Activated naive CD4-positive, alpha-beta T cell treated with anti-CD3 and anti-CD28 coated beads for 36 hours (primary cell): ENCODE measurements at regions of chr4 and their contacts with region 1.

Region 1: DNA sequence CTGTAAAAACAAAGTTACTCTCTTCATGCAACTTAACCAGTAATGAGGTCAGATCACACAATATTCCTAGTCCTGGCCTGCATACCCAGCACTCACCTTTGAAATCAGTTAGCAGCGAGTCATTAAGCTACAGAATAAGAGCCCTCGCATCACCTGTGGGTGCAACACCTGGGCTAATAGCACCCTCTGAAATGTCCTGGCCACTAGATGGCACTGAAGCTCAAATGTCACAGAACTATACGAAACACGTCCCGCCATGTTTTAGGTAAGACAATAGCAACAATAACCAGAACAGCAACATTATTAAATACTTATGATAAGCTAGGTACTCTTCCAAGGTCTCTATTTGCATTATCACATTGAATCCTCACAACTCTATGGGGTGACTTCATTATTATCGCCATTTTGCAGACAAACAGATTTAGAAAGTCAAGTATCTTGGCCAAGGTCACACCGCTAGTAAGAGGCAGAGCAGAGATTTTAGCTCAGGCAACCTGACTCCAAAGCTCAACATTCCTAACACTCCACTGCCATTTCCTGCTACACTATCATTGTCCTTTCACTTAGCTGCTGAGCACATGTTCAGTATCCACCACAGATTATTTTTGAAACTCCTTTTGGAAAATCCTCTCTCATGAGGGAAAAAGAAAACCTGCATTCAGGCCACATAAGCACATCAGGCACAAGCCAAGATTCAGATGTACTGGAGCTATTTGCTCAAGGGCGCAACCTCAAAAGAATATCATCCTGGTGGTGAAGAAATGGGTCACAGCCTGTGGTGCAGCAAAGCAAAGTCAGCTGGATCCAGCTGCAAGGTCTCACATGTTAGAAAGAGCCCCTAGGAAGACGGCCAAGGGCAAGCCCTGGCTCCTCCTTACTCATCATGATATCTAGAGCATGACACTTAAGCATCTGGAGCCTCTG is 59.5 kb upstream of the KDR start:
- DNase-seq: peak; percentile 54
- H3K4me3 Mint-ChIP-seq: no peak overlapping the region
- H3K27ac Mint-ChIP-seq: no peak overlapping the region
- H3K4me1 Mint-ChIP-seq: no peaks in the 10 kb centered on the region
- H3K27me3 Mint-ChIP-seq: no peaks in the 10 kb centered on the region

Region 2: DNA sequence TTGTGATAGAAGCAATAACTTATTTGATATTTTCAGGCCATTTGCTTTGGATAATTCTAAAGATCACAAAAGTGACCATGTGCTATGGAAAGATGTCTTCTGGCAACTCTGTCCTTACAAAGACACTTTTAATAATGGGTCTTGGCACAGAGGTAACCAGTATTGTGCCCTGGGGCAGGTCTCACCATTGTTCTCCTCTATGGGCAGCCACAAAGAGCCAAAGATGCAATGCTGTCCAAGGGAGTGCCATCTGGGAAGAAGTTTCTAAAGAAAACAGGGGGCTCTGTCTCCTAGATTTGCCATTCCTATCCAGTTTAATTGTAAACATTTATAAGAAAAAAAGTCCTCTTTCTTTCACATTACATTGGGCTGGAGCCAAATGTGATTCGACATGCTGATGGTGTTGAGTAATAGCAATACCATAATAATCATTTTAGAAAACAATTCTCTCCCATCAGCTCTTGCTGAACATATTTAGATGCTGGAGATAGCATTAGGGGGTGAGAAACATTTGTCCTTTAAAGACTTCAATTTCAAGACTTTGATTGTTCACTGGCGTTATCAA is 347.2 kb before region 1 on chr4:
- CTCF ChIA-PET with region 1: no interaction called
- intact Hi-C with region 1: no loop called
- DNase-seq: no peak
- H3K4me3 Mint-ChIP-seq: no peak overlapping the region
- H3K27ac Mint-ChIP-seq: no peak overlapping the region
- H3K4me1 Mint-ChIP-seq: peaks cover 2% of the 10 kb centered on the region
- H3K27me3 Mint-ChIP-seq: no peaks in the 10 kb centered on the region

Region 3: GRCh38 chr4:54941994-54942552 is 242.8 kb before region 1 on chr4:
- CTCF ChIA-PET with region 1: no interaction called
- intact Hi-C with region 1: no loop called
- DNase-seq: peak; percentile 65
- H3K4me3 Mint-ChIP-seq: peak overlapping the region; percentile 42
- H3K27ac Mint-ChIP-seq: peak overlapping the region; percentile 69
- H3K4me1 Mint-ChIP-seq: peaks cover 55% of the 10 kb centered on the region
- H3K27me3 Mint-ChIP-seq: no peaks in the 10 kb centered on the region

Region 4: DNA sequence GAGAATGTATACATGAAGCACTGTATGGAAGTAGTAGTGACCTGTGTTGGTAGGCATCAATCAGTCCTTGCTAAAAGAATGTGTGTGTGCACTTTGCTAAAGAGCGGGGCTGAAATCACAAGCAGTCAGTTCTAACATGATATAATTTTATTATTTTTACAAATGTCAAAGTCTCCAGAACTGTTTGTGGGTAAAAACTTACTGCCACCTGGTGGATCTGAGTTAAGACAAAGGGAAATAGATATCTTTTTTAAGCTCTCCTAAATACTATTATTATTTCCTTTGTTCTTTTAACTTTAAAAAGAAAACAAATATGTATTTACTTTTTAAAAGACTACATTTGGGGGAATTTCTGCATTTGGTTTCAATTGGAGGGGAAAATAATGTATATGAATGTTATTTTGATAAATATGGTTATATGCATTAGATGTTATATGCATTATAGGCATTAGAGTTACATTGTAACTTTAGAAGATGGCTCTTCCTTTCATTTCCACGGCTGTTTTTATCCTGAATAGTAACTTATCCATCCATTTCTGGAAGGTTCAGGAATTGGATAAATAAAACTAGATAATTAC is 369.7 kb after region 1 on chr4:
- CTCF ChIA-PET with region 1: no interaction called
- intact Hi-C with region 1: loop called (anchors 2 kb)
- DNase-seq: no peak
- H3K4me3 Mint-ChIP-seq: no peak overlapping the region
- H3K27ac Mint-ChIP-seq: no peak overlapping the region
- H3K4me1 Mint-ChIP-seq: peaks cover 12% of the 10 kb centered on the region
- H3K27me3 Mint-ChIP-seq: peaks cover 12% of the 10 kb centered on the region